K562 (cell line): ENCODE measurements at regions of chr3 and their contacts with region 1.

Region 1: DNA sequence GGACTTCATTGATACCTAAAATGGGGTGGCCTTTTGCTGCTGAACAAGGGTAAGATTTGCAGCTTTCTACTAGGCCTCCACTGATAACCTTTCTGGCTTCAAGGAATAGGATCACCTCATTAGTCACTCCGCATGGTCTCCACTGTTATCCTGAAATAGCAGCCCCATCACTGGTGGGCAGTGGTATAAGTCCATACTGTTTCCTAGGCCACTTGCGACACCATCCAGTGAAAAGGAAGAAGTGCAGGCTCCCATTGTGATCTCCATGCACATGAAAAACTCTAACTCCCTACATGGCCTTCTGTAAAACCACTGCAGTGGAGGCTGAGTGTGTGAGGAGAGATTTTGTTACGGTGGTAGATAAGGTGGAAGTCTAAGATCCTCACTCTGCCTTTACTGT is 1455.9 kb downstream of the SI start:
- DNase-seq: peak in 3 of 4 experiments; percentile 5 to 41 (median 6)
- ATAC-seq: peak; percentile 90
- H3K4me3 ChIP-seq: no peak overlapping the region
- H3K27ac ChIP-seq: no peak overlapping the region
- H3K4me1 ChIP-seq: no peaks in the 10 kb centered on the region
- H3K27me3 ChIP-seq: no peaks in the 10 kb centered on the region
- CTCF ChIP-seq: peak; percentile 48 to 91 (median 69); a peak in 5 of 6 replicates
- EP300 ChIP-seq: no peak
- POLR2A ChIP-seq: no peak
- RAD21 ChIP-seq: peak; percentile 18 to 64; a peak in 2 of 4 replicates

Region 2: GRCh38 chr3:163056874-163057497 is 565.4 kb before region 1 on chr3:
- CTCF ChIA-PET with region 1: no interaction called
- POLR2A ChIA-PET with region 1: no interaction called
- in situ Hi-C with region 1: no loop called
- intact Hi-C with region 1: loop called (anchors 10 kb)
- DNase-seq: peak; percentile 22 to 58 (median 26)
- ATAC-seq: peak; percentile 47; the same call in 1 of the 3 replicates
- H3K4me3 ChIP-seq: no peak overlapping the region
- H3K27ac ChIP-seq: no peak overlapping the region
- H3K4me1 ChIP-seq: no peaks in the 10 kb centered on the region
- H3K27me3 ChIP-seq: no peaks in the 10 kb centered on the region
- CTCF ChIP-seq: peak; percentile 16 to 50 (median 35); a peak in 3 of 6 replicates
- EP300 ChIP-seq: no peak
- POLR2A ChIP-seq: no peak
- RAD21 ChIP-seq: peak; percentile 35 to 60; a peak in 3 of 4 replicates

Region 3: GRCh38 chr3:163490119-163490518 is 132.3 kb before region 1 on chr3:
- CTCF ChIA-PET with region 1: no interaction called
- POLR2A ChIA-PET with region 1: no interaction called
- in situ Hi-C with region 1: no loop called
- intact Hi-C with region 1: loop called (anchors 10 kb)
- DNase-seq: peak; percentile 9 to 59 (median 17)
- ATAC-seq: peak; percentile 85
- H3K4me3 ChIP-seq: no peak overlapping the region
- H3K27ac ChIP-seq: no peak overlapping the region
- H3K4me1 ChIP-seq: no peaks in the 10 kb centered on the region; a peak in 1 of 5 replicates
- H3K27me3 ChIP-seq: no peaks in the 10 kb centered on the region
- CTCF ChIP-seq: peak; percentile 52 to 57 (median 56)
- EP300 ChIP-seq: no peak
- POLR2A ChIP-seq: no peak
- RAD21 ChIP-seq: peak in 1 of 2 experiments; percentile 63; a peak in 2 of 4 replicates